Activated CD4-positive, alpha-beta T cell treated with anti-CD3 and anti-CD28 coated beads for 36 hours (primary cell): ENCODE measurements at regions of chr1 and their contacts with region 1.

Region 1: DNA sequence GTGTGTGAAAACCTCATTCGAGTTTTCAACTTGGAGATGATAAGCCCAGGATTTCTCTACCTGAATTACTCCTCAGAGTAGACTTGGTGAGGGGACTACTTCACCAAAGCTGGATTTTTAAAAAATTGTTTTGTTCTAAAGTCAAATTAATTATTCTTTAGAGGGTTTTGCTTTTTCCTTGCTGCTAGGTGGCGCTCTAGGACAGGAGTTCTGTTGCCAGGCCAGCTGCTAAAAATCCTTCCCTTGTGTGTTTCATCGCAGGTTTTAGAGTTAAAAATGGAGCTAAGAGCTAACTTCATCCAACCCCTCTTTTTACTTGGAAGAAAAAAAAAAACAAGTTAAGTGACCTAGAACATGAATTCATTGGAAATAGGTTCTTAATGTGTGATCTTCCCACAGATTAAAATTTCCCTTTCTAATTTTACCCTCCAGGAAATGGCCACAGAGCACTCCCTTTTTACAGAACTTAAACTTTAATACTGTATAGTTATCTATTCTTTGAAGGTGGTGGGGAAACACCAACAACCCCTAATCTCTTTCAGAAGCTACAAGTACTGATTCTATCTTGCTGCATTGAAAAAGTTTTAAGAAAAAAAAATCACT is 36.7 kb upstream of the FAM163A start:
- DNase-seq: peak; percentile 79
- ATAC-seq: peak; percentile 55
- H3K4me3 Mint-ChIP-seq: no peak overlapping the region
- H3K27ac Mint-ChIP-seq: peak overlapping the region; percentile 38
- H3K4me1 Mint-ChIP-seq: peaks cover 17% of the 10 kb centered on the region
- H3K27me3 Mint-ChIP-seq: no peaks in the 10 kb centered on the region

Region 2: DNA sequence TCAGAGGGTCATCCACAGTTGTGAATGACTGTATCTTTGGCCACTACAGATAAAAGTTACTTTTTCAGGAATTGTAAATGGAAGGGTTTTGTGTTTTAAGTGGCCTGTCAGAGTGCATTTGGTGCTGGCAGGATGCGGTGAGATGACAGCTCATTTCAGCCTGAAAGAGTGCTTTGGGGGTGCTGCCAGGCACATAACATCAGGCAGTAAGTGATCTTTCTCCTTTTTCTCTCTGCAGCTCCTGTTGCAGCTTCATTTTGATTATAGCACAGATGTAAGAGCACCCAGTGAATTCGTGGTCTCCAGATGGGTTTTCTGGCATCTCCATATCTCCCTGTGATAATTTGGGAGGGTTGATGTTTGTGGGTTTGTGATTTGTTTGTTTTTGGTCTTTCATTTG is 21.8 kb after region 1 on chr1:
- CTCF ChIA-PET with region 1: interaction called, 11 read pairs
- POLR2A ChIA-PET with region 1: no interaction called
- intact Hi-C with region 1: no loop called
- DNase-seq: no peak
- ATAC-seq: no peak
- H3K4me3 Mint-ChIP-seq: no peak overlapping the region
- H3K27ac Mint-ChIP-seq: no peak overlapping the region
- H3K4me1 Mint-ChIP-seq: no peaks in the 10 kb centered on the region
- H3K27me3 Mint-ChIP-seq: peaks cover 10% of the 10 kb centered on the region